WTC11 (cell line): ENCODE measurements at regions of chr21 and their contacts with region 1.

Region 1: DNA sequence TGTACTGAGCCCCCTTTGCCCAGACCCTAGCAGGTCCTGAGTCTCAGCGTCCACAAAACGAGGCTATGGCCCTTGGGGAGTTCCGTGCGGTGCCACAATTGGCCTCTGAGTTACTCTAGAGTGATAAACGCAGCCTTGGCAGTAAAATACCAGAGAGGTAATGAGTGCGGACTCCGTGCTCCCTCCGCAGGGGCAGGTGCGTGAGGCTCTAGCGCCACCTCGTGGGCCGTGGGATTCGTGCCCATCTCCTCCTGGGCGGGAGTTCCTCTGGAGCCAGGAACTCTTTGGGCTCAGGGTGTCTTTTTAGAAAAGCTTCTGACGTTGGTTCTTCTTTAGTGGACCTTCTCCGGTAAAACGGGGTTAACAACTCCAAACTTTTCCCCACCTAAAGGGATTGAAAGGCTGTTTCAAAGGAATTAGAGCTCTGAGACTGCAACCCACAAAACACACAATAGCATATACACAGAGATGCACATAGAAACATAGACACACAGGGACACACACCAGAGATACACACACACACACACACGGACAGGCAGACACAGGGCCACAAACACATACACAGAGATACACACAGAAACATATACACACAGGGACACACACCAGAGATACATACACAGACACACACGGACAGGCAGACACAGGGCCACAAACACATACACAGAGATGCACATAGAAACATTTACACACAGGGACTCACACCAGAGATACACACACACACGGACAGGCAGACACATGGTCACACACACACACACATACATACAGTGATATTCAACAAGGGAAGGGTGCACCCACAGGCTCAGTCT is 99.4 kb downstream of the KCNJ15 start:
- DNase-seq: peak; percentile 90
- ATAC-seq: peak; percentile 78
- H3K4me3 Mint-ChIP-seq: no peak overlapping the region
- H3K27ac Mint-ChIP-seq: no peak overlapping the region
- H3K4me1 Mint-ChIP-seq: peaks cover 22% of the 10 kb centered on the region
- H3K27me3 Mint-ChIP-seq: peaks cover 18% of the 10 kb centered on the region
- CTCF ChIP-seq: peak; percentile 86

Region 2: GRCh38 chr21:38075831-38076587 is 280.2 kb before region 1 on chr21:
- CTCF ChIA-PET with region 1: no interaction called
- POLR2A ChIA-PET with region 1: no interaction called
- DNase-seq: no peak
- ATAC-seq: no peak
- H3K4me3 Mint-ChIP-seq: no peak overlapping the region
- H3K27ac Mint-ChIP-seq: peak overlapping the region; percentile 7; the same call in 1 of the 2 replicates
- H3K4me1 Mint-ChIP-seq: peaks cover 21% of the 10 kb centered on the region
- H3K27me3 Mint-ChIP-seq: no peaks in the 10 kb centered on the region; the same call in 1 of the 2 replicates
- CTCF ChIP-seq: no peak

Region 3: DNA sequence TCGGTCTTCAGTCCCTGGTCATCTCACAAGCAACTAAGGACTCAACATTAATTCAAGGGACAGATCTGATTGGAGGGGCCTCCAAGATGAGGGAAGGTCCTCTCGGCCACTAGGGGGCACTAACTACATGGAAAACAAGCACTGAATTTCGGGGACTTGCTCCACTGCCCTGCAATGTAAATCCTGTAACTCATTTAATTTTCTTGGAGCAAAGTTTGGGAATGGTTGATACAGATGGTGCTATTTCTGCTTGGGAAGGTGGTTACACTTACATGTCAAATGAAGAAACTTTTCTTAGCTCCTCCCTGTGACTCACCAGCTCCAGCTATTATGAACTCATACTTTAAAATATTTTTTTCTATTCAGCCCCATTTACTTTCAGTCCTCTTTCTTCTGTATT is 196.8 kb before region 1 on chr21:
- CTCF ChIA-PET with region 1: interaction called, 15 read pairs
- POLR2A ChIA-PET with region 1: no interaction called
- DNase-seq: peak; percentile 71
- ATAC-seq: peak; percentile 82
- H3K4me3 Mint-ChIP-seq: no peak overlapping the region
- H3K27ac Mint-ChIP-seq: no peak overlapping the region
- H3K4me1 Mint-ChIP-seq: no peaks in the 10 kb centered on the region
- H3K27me3 Mint-ChIP-seq: peaks cover 2% of the 10 kb centered on the region; the same call in 1 of the 2 replicates
- CTCF ChIP-seq: peak; percentile 79

Region 4: DNA sequence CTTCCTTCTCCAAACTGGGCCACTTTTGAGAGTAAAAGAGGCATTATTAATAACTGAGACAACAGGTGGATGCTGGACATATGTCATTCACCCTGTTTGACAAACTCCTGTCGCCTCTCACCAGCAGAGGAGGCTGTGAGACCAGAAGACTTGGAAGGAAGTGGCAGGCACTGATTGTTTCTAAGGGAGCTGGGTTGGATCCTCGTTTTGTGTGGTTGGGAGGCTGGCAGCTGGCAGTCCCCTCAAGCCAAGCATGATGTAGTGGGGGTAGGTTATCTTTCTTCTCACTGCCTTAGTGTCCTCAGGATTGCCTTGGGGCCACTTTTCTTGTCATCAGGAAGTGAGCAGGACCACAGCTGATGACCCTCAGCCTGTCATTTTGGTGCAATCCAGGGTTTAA is 185.9 kb before region 1 on chr21:
- CTCF ChIA-PET with region 1: interaction called, 194 read pairs
- POLR2A ChIA-PET with region 1: no interaction called
- DNase-seq: peak; percentile 44
- ATAC-seq: peak; percentile 31
- H3K4me3 Mint-ChIP-seq: no peak overlapping the region
- H3K27ac Mint-ChIP-seq: no peak overlapping the region
- H3K4me1 Mint-ChIP-seq: peaks cover 35% of the 10 kb centered on the region
- H3K27me3 Mint-ChIP-seq: no peaks in the 10 kb centered on the region
- CTCF ChIP-seq: no peak; the same call in 1 of the 2 replicates

Region 5: DNA sequence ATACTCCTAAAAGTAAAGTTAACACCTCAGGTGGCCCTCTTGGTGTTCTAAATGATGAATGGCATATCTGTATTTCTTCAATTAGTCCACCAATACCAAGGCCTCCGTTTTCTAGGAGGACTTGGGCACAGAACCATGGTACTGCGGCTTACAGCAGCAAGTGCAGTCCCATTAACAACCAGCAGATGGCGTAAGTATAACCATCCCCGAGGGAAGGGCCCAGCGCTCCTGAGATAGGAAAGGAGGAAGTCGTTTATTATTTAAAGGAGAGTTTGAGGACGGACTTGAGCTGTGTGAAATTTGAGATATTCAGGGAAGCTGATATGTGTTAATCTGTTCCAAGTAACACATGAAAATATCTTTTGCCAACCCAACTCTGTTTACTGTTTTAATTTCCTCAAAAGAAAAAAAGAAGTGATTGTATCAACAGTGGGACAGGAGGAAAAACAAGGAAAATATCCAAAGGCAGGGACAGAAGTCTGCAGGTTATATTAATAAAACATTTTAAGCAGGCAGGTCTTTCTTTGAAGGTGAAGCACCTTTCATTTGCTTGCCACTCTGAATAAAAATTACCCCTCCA is 137.1 kb before region 1 on chr21:
- CTCF ChIA-PET with region 1: interaction called, 45 read pairs
- POLR2A ChIA-PET with region 1: no interaction called
- DNase-seq: peak; percentile 76
- ATAC-seq: peak; percentile 93
- H3K4me3 Mint-ChIP-seq: no peak overlapping the region
- H3K27ac Mint-ChIP-seq: no peak overlapping the region
- H3K4me1 Mint-ChIP-seq: peaks cover 6% of the 10 kb centered on the region
- H3K27me3 Mint-ChIP-seq: peaks cover 14% of the 10 kb centered on the region
- CTCF ChIP-seq: peak; percentile 91

Region 6: GRCh38 chr21:38241029-38241740 is 115.0 kb before region 1 on chr21:
- CTCF ChIA-PET with region 1: interaction called, 10 read pairs
- POLR2A ChIA-PET with region 1: no interaction called
- DNase-seq: no peak
- ATAC-seq: no peak
- H3K4me3 Mint-ChIP-seq: no peak overlapping the region
- H3K27ac Mint-ChIP-seq: no peak overlapping the region
- H3K4me1 Mint-ChIP-seq: no peaks in the 10 kb centered on the region; the same call in 1 of the 2 replicates
- H3K27me3 Mint-ChIP-seq: no peaks in the 10 kb centered on the region
- CTCF ChIP-seq: no peak

Region 7: GRCh38 chr21:38333301-38334272 is 22.6 kb before region 1 on chr21:
- CTCF ChIA-PET with region 1: interaction called, 14 read pairs
- POLR2A ChIA-PET with region 1: no interaction called
- DNase-seq: no peak
- ATAC-seq: peak; percentile 82
- H3K4me3 Mint-ChIP-seq: no peak overlapping the region
- H3K27ac Mint-ChIP-seq: no peak overlapping the region
- H3K4me1 Mint-ChIP-seq: peaks cover 5% of the 10 kb centered on the region; the same call in 1 of the 2 replicates
- H3K27me3 Mint-ChIP-seq: no peaks in the 10 kb centered on the region
- CTCF ChIP-seq: no peak

Region 8: DNA sequence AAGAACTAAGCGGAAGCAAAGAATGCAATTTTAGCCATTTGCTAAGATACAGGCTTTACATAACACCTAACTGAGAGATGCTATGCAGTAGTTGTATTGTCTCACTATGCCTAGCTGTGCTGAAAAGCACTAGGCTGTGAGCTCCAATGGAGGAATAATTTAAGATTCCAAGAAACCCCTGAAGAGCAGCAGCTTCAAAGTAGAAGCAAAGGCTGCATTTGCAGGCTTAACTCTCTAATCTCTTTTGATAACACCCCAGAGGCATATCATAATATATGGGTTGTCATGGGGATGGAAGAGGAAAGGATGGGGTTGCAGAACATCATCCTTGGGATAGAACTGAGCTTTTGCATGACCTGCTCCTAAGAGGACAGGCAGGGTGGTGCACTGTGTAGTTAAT is 40.1 kb after region 1 on chr21:
- CTCF ChIA-PET with region 1: no interaction called
- POLR2A ChIA-PET with region 1: no interaction called
- DNase-seq: no peak
- ATAC-seq: no peak
- H3K4me3 Mint-ChIP-seq: no peak overlapping the region
- H3K27ac Mint-ChIP-seq: no peak overlapping the region
- H3K4me1 Mint-ChIP-seq: peaks cover 20% of the 10 kb centered on the region
- H3K27me3 Mint-ChIP-seq: no peaks in the 10 kb centered on the region
- CTCF ChIP-seq: no peak